ENCODE measurements at regions of chr19 and their contacts with region 1.

Region 1: GRCh38 chr19:12793290-12794199 is 2.3 kb downstream of the JUNB start:
- DNase-seq: peak; percentile 92 to 99
- H3K4me3 ChIP-seq: peak overlapping the region; percentile 85
- CTCF ChIP-seq: no peak
- POLR2A ChIP-seq: no peak

Region 2: DNA sequence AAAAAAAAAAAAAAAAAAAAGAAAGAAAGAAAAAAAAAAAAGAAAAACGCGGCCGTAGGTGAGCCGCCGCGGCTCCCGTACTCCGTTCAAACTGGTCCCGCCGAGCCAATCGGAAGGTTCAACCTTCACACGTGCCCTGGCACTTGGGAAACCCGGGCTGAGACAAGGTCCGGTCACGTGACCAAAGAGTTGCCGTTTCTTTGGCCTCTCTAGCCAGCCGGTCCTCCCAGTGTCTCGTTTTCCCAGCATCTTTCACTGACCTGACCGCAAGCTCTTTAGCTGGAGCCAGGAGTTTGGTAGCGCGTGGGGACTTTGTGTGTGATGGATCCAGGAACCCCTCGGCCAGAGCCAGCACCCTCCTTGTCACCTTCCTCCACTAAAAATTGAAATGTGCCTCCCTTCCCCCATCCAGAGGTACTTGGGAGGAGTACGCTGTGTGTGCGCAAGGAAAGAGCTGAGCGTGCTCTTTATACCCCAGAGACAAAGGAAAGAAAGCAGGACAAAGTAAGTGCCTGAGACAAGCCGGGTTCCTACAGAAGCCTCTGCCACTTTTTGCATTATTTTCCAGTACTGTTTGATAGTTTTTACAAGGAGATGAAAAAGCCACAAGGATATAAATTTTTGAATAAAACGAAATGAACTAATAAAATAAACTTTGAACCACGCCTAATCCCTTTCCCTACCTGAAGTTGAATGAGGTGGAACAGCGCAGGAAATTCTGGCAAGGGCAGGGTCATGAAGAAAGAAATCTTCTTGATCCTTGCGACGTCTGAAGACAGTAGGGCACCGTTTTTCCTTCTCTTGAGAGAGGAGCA is 70.8 kb before region 1 on chr19:
- intact Hi-C with region 1: no loop called
- DNase-seq: peak; percentile 98 to 99
- H3K4me3 ChIP-seq: peak overlapping the region; percentile 88
- CTCF ChIP-seq: no peak
- POLR2A ChIP-seq: no peak

Region 3: DNA sequence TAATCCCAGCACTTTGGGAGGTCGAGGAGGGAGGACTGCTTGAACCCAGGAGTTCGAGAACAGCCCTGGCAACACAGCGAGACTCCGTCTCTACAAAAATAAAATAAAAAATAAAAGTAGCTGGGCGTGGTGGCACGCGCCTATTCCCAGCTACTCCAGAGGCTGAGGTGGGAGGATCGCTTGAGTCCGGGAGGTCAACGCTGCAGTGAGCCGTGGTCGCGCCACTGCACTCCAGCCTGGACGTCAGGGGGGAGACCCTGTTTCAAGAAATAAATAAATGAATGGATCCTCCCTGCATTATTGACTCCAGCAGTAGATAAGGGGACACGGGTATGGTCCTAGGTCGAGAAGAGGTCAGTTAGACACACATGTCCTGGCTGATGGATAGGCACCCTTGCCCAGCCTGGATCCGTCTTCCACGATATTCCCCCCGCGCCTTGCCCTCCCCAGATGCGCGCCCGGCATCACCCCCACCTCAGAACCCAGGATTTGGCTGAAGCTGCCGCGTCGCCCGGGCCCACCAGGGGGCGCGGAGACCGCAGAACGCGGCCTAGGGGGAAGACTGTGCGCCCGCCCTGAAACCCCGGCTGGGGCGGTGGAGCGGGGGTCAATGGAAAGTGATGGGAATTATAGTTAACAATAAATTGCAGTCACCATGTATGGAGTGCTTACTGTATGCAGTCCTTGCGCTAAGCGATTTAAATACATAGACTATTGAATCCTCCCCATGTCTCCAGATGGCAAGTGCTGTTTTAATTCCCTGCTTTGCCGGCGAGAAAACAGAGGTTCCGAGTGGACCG is 16.1 kb before region 1 on chr19:
- intact Hi-C with region 1: loop called (anchors 2 kb)
- DNase-seq: peak; percentile 58 to 96
- H3K4me3 ChIP-seq: peak overlapping the region; percentile 46
- CTCF ChIP-seq: peak in 1 of 3 donors; percentile 77
- POLR2A ChIP-seq: no peak